ENCODE measurements at regions of chr16 and their contacts with region 1.

Region 1: GRCh38 chr16:2155091-2156021 is at the start of gene TRAF7:
- DNase-seq: peak; percentile 91
- ATAC-seq: peak; percentile 92
- H3K4me3 Mint-ChIP-seq: peak within 1 kb of the TSS; percentile 95
- H3K27ac Mint-ChIP-seq: peak within 1 kb of the TSS; percentile 83
- H3K4me1 Mint-ChIP-seq: peaks cover 77% of the 10 kb centered on the region
- H3K27me3 Mint-ChIP-seq: no peaks in the 10 kb centered on the region
- CTCF ChIP-seq: no peak
- total RNA-seq, gene TRAF7: 72.7 and 78.1 TPM in 2 replicates

Region 2: GRCh38 chr16:1579201-1579600 is 576.2 kb before region 1 on chr16:
- CTCF ChIA-PET with region 1: no interaction called
- POLR2A ChIA-PET with region 1: no interaction called
- intact Hi-C with region 1: no loop called
- DNase-seq: no peak
- ATAC-seq: no peak
- H3K4me3 Mint-ChIP-seq: no peak overlapping the region
- H3K27ac Mint-ChIP-seq: no peak overlapping the region
- H3K4me1 Mint-ChIP-seq: no peaks in the 10 kb centered on the region
- H3K27me3 Mint-ChIP-seq: no peaks in the 10 kb centered on the region
- CTCF ChIP-seq: no peak

Region 3: GRCh38 chr16:1782352-1783091 is 372.8 kb before region 1 on chr16 and contains the starts of genes NUBP2 and SPSB3:
- CTCF ChIA-PET with region 1: no interaction called
- POLR2A ChIA-PET with region 1: interaction called, 14 read pairs
- intact Hi-C with region 1: no loop called
- DNase-seq: peak; percentile 91
- ATAC-seq: peak; percentile 88
- H3K4me3 Mint-ChIP-seq: peak within 1 kb of the TSS; percentile 89
- H3K27ac Mint-ChIP-seq: peak within 1 kb of the TSS; percentile 87
- H3K4me1 Mint-ChIP-seq: peaks cover 24% of the 10 kb centered on the region
- H3K27me3 Mint-ChIP-seq: no peaks in the 10 kb centered on the region
- CTCF ChIP-seq: no peak
- total RNA-seq, gene NUBP2: 53.7 and 54.2 TPM in 2 replicates
- total RNA-seq, gene SPSB3: 36.4 and 40.3 TPM in 2 replicates

Region 4: GRCh38 chr16:1845985-1846384 is 309.4 kb before region 1 on chr16:
- CTCF ChIA-PET with region 1: no interaction called
- POLR2A ChIA-PET with region 1: no interaction called
- intact Hi-C with region 1: no loop called
- DNase-seq: no peak
- ATAC-seq: no peak
- H3K4me3 Mint-ChIP-seq: no peak overlapping the region
- H3K27ac Mint-ChIP-seq: no peak overlapping the region
- H3K4me1 Mint-ChIP-seq: no peaks in the 10 kb centered on the region
- H3K27me3 Mint-ChIP-seq: peaks cover 8% of the 10 kb centered on the region
- CTCF ChIP-seq: no peak

Region 5: DNA sequence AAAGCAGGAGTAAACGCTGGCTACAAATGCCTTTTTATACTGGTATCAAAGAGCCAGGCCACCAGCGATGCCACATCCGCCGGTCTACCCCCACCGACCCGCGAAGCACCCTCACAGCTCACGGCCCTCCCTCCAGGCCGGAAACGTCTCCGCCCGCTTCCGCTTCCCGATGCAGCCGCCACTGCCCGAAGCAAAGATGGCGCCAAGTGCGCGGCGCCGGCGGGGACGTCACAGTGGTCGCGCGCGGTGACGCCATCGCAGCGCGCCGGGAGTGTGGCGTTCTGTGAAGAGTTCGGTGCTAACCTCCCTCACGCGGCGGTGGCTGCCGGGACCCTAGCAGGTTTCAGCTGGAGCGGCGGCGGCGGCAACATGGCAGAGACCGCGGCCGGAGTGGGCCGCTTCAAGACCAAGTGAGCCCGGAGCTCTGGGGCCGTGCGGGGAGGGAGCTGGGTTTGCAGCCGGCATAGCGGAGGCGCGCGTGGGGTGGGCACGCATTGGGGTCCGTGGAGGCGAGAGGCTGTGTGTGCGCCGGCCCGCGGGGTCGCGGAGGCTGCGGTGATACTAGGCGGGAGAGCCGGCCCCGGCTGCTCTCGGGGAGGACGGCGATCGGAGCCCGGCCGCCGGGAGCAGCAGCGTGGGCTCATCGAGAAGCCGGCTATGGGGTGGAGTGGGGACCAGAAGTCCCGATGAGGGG is 183.4 kb before region 1 on chr16 and contains the start of gene TBL3:
- CTCF ChIA-PET with region 1: no interaction called
- POLR2A ChIA-PET with region 1: interaction called, 25 read pairs
- intact Hi-C with region 1: no loop called
- DNase-seq: peak; percentile 99
- ATAC-seq: peak; percentile 97
- H3K4me3 Mint-ChIP-seq: peak within 1 kb of the TSS; percentile 93
- H3K27ac Mint-ChIP-seq: peak within 1 kb of the TSS; percentile 97
- H3K4me1 Mint-ChIP-seq: peaks cover 23% of the 10 kb centered on the region
- H3K27me3 Mint-ChIP-seq: no peaks in the 10 kb centered on the region
- CTCF ChIP-seq: no peak
- total RNA-seq, gene TBL3: 41.8 and 44.2 TPM in 2 replicates

Region 6: GRCh38 chr16:2009789-2010510 is 145.4 kb before region 1 on chr16 and contains the start of gene ZNF598:
- CTCF ChIA-PET with region 1: interaction called, 14 read pairs
- POLR2A ChIA-PET with region 1: interaction called, 36 read pairs
- intact Hi-C with region 1: no loop called
- DNase-seq: peak; percentile 83
- ATAC-seq: peak; percentile 94
- H3K4me3 Mint-ChIP-seq: peak within 1 kb of the TSS; percentile 92
- H3K27ac Mint-ChIP-seq: peak within 1 kb of the TSS; percentile 90
- H3K4me1 Mint-ChIP-seq: peaks cover 41% of the 10 kb centered on the region
- H3K27me3 Mint-ChIP-seq: no peaks in the 10 kb centered on the region
- CTCF ChIP-seq: no peak
- total RNA-seq, gene ZNF598: 56.4 and 59.3 TPM in 2 replicates

Region 7: GRCh38 chr16:2166757-2167638 is 11.6 kb after region 1 on chr16:
- CTCF ChIA-PET with region 1: no interaction called
- POLR2A ChIA-PET with region 1: interaction called, 14 read pairs
- intact Hi-C with region 1: no loop called
- DNase-seq: no peak
- ATAC-seq: no peak
- H3K4me3 Mint-ChIP-seq: no peak overlapping the region
- H3K27ac Mint-ChIP-seq: no peak overlapping the region
- H3K4me1 Mint-ChIP-seq: no peaks in the 10 kb centered on the region
- H3K27me3 Mint-ChIP-seq: no peaks in the 10 kb centered on the region
- CTCF ChIP-seq: no peak

Region 8: GRCh38 chr16:2223375-2224182 is 68.2 kb after region 1 on chr16 and contains the start of gene E4F1:
- CTCF ChIA-PET with region 1: no interaction called
- POLR2A ChIA-PET with region 1: interaction called, 10 read pairs
- intact Hi-C with region 1: no loop called
- DNase-seq: peak; percentile 98
- ATAC-seq: peak; percentile 98
- H3K4me3 Mint-ChIP-seq: peak within 1 kb of the TSS; percentile 81
- H3K27ac Mint-ChIP-seq: peak within 1 kb of the TSS; percentile 59
- H3K4me1 Mint-ChIP-seq: peaks cover 20% of the 10 kb centered on the region
- H3K27me3 Mint-ChIP-seq: no peaks in the 10 kb centered on the region
- CTCF ChIP-seq: no peak
- total RNA-seq, gene E4F1: 29.9 and 31.3 TPM in 2 replicates

Region 9: GRCh38 chr16:2486645-2487516 is 331.5 kb after region 1 on chr16:
- CTCF ChIA-PET with region 1: no interaction called
- POLR2A ChIA-PET with region 1: interaction called, 11 read pairs
- intact Hi-C with region 1: no loop called
- DNase-seq: peak; percentile 73
- ATAC-seq: peak; percentile 97
- H3K4me3 Mint-ChIP-seq: peak overlapping the region; percentile 71
- H3K27ac Mint-ChIP-seq: peak overlapping the region; percentile 83
- H3K4me1 Mint-ChIP-seq: peaks cover 26% of the 10 kb centered on the region
- H3K27me3 Mint-ChIP-seq: no peaks in the 10 kb centered on the region
- CTCF ChIP-seq: no peak

Measured in activated B cell treated with CpG ODN at 0.5 μM for 24 hours (primary cell).